ENCODE measurements at regions of chr7 and their contacts with region 1.

Region 1: GRCh38 chr7:150737265-150738055 is at the start of gene GIMAP5:
- DNase-seq: peak; percentile 44
- H3K4me3 Mint-ChIP-seq: peak within 1 kb of the TSS; percentile 91
- H3K27ac Mint-ChIP-seq: peak within 1 kb of the TSS; percentile 91
- H3K4me1 Mint-ChIP-seq: peaks cover 78% of the 10 kb centered on the region
- H3K27me3 Mint-ChIP-seq: no peaks in the 10 kb centered on the region
- total RNA-seq, gene GIMAP5: 42.9 and 46.7 TPM in 2 replicates

Region 2: GRCh38 chr7:149873074-149873969 is 864.1 kb before region 1 on chr7 and contains the start of gene ATP6V0E2:
- intact Hi-C with region 1: loop called (anchors 10 kb)
- DNase-seq: peak; percentile 91
- H3K4me3 Mint-ChIP-seq: peak within 1 kb of the TSS; percentile 89
- H3K27ac Mint-ChIP-seq: peak within 1 kb of the TSS; percentile 90
- H3K4me1 Mint-ChIP-seq: peaks cover 57% of the 10 kb centered on the region
- H3K27me3 Mint-ChIP-seq: no peaks in the 10 kb centered on the region
- total RNA-seq, gene ATP6V0E2: 50.2 and 54.3 TPM in 2 replicates

Region 3: DNA sequence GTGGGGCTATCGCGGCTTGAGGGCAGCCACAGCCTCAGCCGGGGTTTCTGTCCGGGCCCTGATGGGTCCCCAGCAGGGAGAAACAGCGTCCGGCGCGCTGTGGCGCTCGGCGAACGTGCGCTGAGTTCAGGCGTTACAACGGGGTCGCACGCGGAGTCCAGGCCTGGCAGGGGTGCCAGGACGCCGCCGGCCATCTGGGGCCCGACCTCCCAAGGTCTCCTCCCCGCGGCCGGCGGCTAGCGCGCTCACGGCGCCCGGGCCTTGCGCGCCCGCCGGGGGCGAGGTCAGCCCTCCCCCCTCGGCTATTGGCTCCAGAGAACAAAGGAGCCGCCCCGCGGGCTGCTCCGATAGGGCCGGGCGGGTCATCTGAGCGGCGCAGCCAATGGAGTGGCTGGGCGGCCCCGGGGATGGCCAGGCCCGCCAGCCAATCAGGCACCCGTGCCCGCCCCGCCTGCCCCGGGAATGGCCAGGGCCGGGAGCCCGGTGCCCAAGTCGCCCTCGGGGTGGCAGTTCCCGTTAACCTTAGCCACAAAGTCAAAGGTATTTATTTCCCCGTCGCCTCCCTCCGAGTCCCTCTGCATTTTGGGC is 358.5 kb before region 1 on chr7 and contains the start of gene ZNF775:
- intact Hi-C with region 1: loop called (anchors 5 kb)
- DNase-seq: peak; percentile 92
- H3K4me3 Mint-ChIP-seq: peak within 1 kb of the TSS; percentile 94
- H3K27ac Mint-ChIP-seq: peak within 1 kb of the TSS; percentile 76
- H3K4me1 Mint-ChIP-seq: peaks cover 49% of the 10 kb centered on the region
- H3K27me3 Mint-ChIP-seq: no peaks in the 10 kb centered on the region
- total RNA-seq, gene ZNF775: 4.5 and 5.5 TPM in 2 replicates

Region 4: DNA sequence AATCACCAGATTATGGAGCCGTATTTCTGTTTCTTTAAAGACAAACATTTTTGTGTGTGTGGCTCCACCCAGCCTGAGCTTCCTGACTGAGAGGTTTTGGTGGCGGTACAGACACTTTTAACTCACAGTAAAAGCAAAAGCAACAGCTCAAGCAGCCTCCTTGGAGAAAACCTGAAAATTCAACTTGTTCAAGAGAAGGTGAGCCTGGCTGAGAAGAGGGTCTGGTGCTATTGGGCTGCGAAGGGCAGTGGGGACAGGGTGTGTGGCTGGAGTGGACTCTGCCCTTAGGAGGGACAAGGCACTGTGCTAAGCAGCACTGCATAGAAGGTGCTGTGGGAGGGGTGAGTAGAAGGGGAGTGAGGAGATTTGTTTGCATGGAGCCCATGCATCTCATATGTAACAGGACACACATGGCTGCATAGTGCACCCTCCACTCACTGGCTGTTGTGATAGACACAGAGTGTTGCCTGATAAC is 222.7 kb before region 1 on chr7 and contains the start of gene GIMAP7:
- intact Hi-C with region 1: loop called (anchors 2 kb)
- DNase-seq: peak; percentile 63
- H3K4me3 Mint-ChIP-seq: peak within 1 kb of the TSS; percentile 89
- H3K27ac Mint-ChIP-seq: peak within 1 kb of the TSS; percentile 89
- H3K4me1 Mint-ChIP-seq: peaks cover 45% of the 10 kb centered on the region
- H3K27me3 Mint-ChIP-seq: no peaks in the 10 kb centered on the region
- total RNA-seq, gene GIMAP7: 22.6 and 24.1 TPM in 2 replicates

Region 5: DNA sequence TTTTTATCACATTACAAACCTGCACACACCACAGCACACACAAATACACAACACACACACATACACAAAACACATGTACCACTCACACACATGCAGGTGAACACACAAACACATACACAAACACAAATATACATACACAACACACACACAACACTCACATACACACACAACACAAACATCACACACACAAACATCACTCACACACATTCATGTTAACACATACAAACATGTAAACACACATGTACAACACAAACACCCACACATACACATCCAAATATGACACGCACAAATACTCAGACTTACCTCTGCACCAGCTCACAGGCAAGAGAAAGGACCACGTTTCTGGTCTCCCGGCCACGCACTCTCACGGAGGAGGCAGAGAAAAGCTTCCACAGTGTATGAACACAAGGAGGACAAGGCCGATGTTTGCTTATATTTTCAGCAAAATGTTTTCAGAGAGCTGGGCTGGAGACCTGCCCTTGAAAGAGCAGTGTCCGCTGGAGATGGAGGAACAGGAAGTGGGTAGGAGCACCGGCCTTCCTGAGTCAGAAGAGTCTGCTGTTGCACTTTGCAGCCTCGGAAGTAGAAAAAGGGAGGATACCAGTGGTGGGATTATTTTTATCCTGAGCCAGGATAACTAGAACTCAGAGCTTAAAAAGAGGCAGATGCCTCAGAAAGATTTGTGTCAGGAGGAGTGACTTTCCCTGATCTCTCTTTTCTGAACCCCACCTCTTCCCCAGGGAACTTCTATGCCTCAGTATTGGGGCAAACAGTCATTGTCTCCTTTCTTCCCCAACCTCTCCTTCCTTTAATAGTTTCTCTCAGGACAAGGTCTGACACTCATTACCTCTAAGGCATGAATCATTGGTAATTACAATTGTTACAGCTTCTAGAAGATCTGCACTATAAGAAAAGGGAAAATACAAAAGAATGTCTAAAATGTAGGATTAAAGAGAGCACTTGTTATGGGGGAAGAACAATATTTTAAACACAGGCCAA is 105.3 kb before region 1 on chr7 and contains the start of gene GIMAP6:
- intact Hi-C with region 1: loop called (anchors 2 kb)
- DNase-seq: no peak
- H3K4me3 Mint-ChIP-seq: peak within 1 kb of the TSS; percentile 90
- H3K27ac Mint-ChIP-seq: peak within 1 kb of the TSS; percentile 84
- H3K4me1 Mint-ChIP-seq: peaks cover 53% of the 10 kb centered on the region
- H3K27me3 Mint-ChIP-seq: no peaks in the 10 kb centered on the region
- total RNA-seq, gene GIMAP6: 25.8 and 29.4 TPM in 2 replicates

Region 6: DNA sequence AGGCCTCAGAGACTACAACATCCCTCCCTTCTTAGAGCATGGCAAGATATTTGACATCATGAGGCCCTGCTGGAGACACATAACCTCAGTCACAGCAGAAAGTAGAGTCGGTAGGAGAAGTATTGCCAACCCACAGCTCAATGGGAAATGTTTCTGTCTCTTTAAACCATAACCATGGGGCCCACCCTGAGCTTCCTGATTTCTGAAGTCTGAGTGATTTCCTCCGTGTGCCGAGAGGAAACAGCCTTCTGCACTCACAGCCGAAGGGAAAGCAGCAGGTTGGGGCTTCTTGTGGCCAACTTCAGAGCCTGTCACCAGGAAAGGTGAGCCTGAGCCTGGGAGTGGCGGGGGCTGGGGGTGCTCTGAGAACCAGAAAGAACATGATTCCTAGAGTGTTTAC is 21.1 kb before region 1 on chr7 and contains the start of gene GIMAP1:
- intact Hi-C with region 1: loop called (anchors 1 kb)
- DNase-seq: peak; percentile 48
- H3K4me3 Mint-ChIP-seq: peak within 1 kb of the TSS; percentile 94
- H3K27ac Mint-ChIP-seq: peak within 1 kb of the TSS; percentile 76
- H3K4me1 Mint-ChIP-seq: peaks cover 51% of the 10 kb centered on the region
- H3K27me3 Mint-ChIP-seq: no peaks in the 10 kb centered on the region
- total RNA-seq, gene GIMAP1: 3.9 and 4.5 TPM in 2 replicates